Calu3 (cell line): ENCODE measurements at regions of chr4 and their contacts with region 1.

Region 1: DNA sequence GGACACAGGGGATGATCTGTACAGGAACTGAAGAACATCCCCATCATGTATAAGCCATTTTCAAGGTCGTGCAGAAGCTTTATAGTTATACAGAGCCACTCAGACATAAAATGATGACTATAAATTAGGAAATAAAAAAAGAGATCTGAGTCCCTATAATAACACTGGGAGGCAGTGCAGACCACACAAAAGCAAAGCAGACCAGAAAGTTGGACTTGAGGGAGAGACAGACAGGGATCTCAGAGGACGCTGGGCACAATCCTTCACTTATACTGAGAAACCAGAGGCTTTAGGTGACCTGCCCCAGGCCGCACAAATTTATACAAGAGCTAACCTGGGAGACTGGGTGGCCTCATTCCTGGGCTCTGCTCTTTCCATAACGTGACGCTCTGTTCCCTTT is 70.5 kb downstream of the HADH start:
- DNase-seq: peak; percentile 17
- H3K4me3 Mint-ChIP-seq: no peak overlapping the region
- H3K27ac Mint-ChIP-seq: no peak overlapping the region
- H3K4me1 Mint-ChIP-seq: peaks cover 8% of the 10 kb centered on the region
- H3K27me3 Mint-ChIP-seq: no peaks in the 10 kb centered on the region
- CTCF ChIP-seq: no peak

Region 2: DNA sequence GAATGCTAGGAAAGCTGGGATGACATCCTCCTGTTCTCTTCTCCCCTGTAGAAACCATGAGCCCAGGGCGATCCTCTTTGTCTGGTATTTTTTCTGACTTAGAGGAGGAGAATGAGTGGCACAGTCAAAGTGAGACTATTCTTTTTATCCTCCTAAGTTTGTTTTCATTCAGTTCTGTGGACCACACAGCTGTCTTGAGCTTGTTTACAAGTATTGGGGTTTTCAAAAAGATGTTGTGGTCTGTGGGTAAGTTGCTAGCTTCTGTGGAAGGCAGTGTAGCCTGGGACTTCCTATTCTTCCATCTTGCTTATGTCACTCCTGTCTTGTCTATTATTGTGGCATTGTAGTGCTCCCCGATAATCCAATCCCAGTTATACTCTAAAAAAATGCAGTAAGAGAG is 563.1 kb before region 1 on chr4:
- CTCF ChIA-PET with region 1: no interaction called
- intact Hi-C with region 1: no loop called
- DNase-seq: no peak
- H3K4me3 Mint-ChIP-seq: no peak overlapping the region
- H3K27ac Mint-ChIP-seq: no peak overlapping the region
- H3K4me1 Mint-ChIP-seq: no peaks in the 10 kb centered on the region
- H3K27me3 Mint-ChIP-seq: no peaks in the 10 kb centered on the region
- CTCF ChIP-seq: no peak

Region 3: DNA sequence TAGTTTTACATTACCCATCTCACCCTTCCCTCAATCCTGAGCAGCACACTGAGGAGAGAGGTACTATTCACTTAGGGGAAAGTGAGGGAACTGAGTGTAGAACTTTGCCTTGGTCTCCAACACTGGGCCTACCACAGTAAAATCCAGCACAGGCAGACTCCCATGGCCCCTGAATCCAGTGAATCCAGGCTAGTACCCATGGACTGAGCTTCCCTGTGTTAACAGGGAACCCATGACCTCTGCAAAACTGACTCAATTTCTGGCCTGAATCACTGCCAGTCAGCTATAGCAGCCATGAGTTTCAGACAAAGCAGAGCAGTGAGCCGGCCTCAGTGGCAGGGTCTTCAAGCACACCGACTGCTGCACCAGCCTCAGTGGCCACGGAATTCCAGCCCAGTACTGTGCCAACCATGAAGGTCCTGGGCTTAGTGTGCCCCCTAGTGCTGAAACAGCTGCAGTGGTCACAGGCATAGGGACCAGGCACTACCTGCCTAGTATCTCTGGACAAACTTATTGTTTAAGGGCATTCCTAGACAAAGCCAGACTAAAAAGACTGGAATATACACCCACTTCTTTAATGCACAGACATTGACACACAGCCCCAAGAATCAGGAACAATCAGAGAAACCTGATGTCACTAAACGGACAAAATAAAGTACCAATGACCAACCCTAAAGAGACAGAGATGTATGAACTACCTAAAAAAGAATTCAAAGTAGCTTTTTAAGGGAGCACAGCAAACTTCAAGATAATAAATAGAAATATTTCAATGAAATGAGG is 432.8 kb after region 1 on chr4:
- CTCF ChIA-PET with region 1: no interaction called
- intact Hi-C with region 1: loop called (anchors 1 kb)
- DNase-seq: peak; percentile 43
- H3K4me3 Mint-ChIP-seq: no peak overlapping the region
- H3K27ac Mint-ChIP-seq: no peak overlapping the region
- H3K4me1 Mint-ChIP-seq: no peaks in the 10 kb centered on the region
- H3K27me3 Mint-ChIP-seq: peaks cover 4% of the 10 kb centered on the region
- CTCF ChIP-seq: peak; percentile 38

Region 4: GRCh38 chr4:108570993-108571569 is 510.9 kb after region 1 on chr4:
- CTCF ChIA-PET with region 1: no interaction called
- intact Hi-C with region 1: loop called (anchors 1 kb)
- DNase-seq: no peak
- H3K4me3 Mint-ChIP-seq: no peak overlapping the region
- H3K27ac Mint-ChIP-seq: no peak overlapping the region
- H3K4me1 Mint-ChIP-seq: no peaks in the 10 kb centered on the region
- H3K27me3 Mint-ChIP-seq: no peaks in the 10 kb centered on the region
- CTCF ChIP-seq: no peak